Activated CD4-positive, alpha-beta T cell treated with anti-CD3 and anti-CD28 coated beads for 36 hours (primary cell): ENCODE measurements at regions of chr4 and their contacts with region 1.

Region 1: GRCh38 chr4:54233277-54233696 is 4.2 kb downstream of the PDGFRA start:
- DNase-seq: peak; percentile 91
- ATAC-seq: peak; percentile 93
- H3K4me3 Mint-ChIP-seq: peak overlapping the region; percentile 60
- H3K27ac Mint-ChIP-seq: no peak overlapping the region
- H3K4me1 Mint-ChIP-seq: peaks cover 20% of the 10 kb centered on the region
- H3K27me3 Mint-ChIP-seq: peaks cover 48% of the 10 kb centered on the region

Region 2: GRCh38 chr4:52659001-52659721 is 1574.1 kb before region 1 on chr4 and contains the start of gene USP46:
- CTCF ChIA-PET with region 1: no interaction called
- POLR2A ChIA-PET with region 1: no interaction called
- intact Hi-C with region 1: loop called in 1 of 2 experiments (anchors 5 kb)
- DNase-seq: peak; percentile 74
- ATAC-seq: peak; percentile 86
- H3K4me3 Mint-ChIP-seq: peak within 1 kb of the TSS; percentile 80
- H3K27ac Mint-ChIP-seq: peak within 1 kb of the TSS; percentile 78
- H3K4me1 Mint-ChIP-seq: peaks cover 18% of the 10 kb centered on the region
- H3K27me3 Mint-ChIP-seq: peaks cover 12% of the 10 kb centered on the region
- total RNA-seq, gene USP46: 4.3 to 5.4 TPM

Region 3: GRCh38 chr4:53015681-53016080 is 1217.6 kb before region 1 on chr4:
- CTCF ChIA-PET with region 1: interaction called, 4 read pairs
- POLR2A ChIA-PET with region 1: no interaction called
- intact Hi-C with region 1: loop called (anchors 2 to 5 kb)
- DNase-seq: peak; percentile 49
- ATAC-seq: no peak
- H3K4me3 Mint-ChIP-seq: no peak overlapping the region
- H3K27ac Mint-ChIP-seq: no peak overlapping the region
- H3K4me1 Mint-ChIP-seq: peaks cover 38% of the 10 kb centered on the region
- H3K27me3 Mint-ChIP-seq: no peaks in the 10 kb centered on the region

Region 4: GRCh38 chr4:53489279-53489889 is 743.9 kb before region 1 on chr4:
- CTCF ChIA-PET with region 1: interaction called, 7 read pairs
- POLR2A ChIA-PET with region 1: interaction called, 4 read pairs
- intact Hi-C with region 1: loop called in 1 of 2 experiments (anchors 5 kb)
- DNase-seq: no peak
- ATAC-seq: no peak
- H3K4me3 Mint-ChIP-seq: no peak overlapping the region
- H3K27ac Mint-ChIP-seq: no peak overlapping the region
- H3K4me1 Mint-ChIP-seq: no peaks in the 10 kb centered on the region
- H3K27me3 Mint-ChIP-seq: peaks cover 33% of the 10 kb centered on the region

Region 5: GRCh38 chr4:53653484-53654053 is 579.7 kb before region 1 on chr4:
- CTCF ChIA-PET with region 1: no interaction called
- POLR2A ChIA-PET with region 1: no interaction called
- intact Hi-C with region 1: no loop called
- DNase-seq: no peak
- ATAC-seq: no peak
- H3K4me3 Mint-ChIP-seq: no peak overlapping the region
- H3K27ac Mint-ChIP-seq: no peak overlapping the region
- H3K4me1 Mint-ChIP-seq: no peaks in the 10 kb centered on the region
- H3K27me3 Mint-ChIP-seq: peaks cover 11% of the 10 kb centered on the region

Region 6: GRCh38 chr4:53908661-53909078 is 324.6 kb before region 1 on chr4:
- CTCF ChIA-PET with region 1: interaction called, 58 read pairs
- POLR2A ChIA-PET with region 1: no interaction called
- intact Hi-C with region 1: loop called (anchors 1 kb)
- DNase-seq: no peak
- ATAC-seq: peak; percentile 60
- H3K4me3 Mint-ChIP-seq: no peak overlapping the region
- H3K27ac Mint-ChIP-seq: no peak overlapping the region
- H3K4me1 Mint-ChIP-seq: peaks cover 13% of the 10 kb centered on the region
- H3K27me3 Mint-ChIP-seq: peaks cover 45% of the 10 kb centered on the region

Region 7: GRCh38 chr4:54100595-54101189 is 132.6 kb before region 1 on chr4:
- CTCF ChIA-PET with region 1: interaction called, 3 read pairs
- POLR2A ChIA-PET with region 1: no interaction called
- intact Hi-C with region 1: loop called (anchors 1 kb)
- DNase-seq: peak; percentile 34
- ATAC-seq: peak; percentile 33
- H3K4me3 Mint-ChIP-seq: peak overlapping the region; percentile 32
- H3K27ac Mint-ChIP-seq: no peak overlapping the region
- H3K4me1 Mint-ChIP-seq: peaks cover 50% of the 10 kb centered on the region
- H3K27me3 Mint-ChIP-seq: peaks cover 82% of the 10 kb centered on the region